Activated CD8-positive, alpha-beta memory T cell treated with anti-CD3 and anti-CD28 coated beads, Interleukin-2, amount 10 ng/mL, durations not matched to agents 7 days and 5 days (primary cell): ENCODE measurements at regions of chr19 and their contacts with region 1.

Region 1: GRCh38 chr19:3429581-3430080 is 50.7 kb downstream of the SMIM24 start:
- DNase-seq: peak; percentile 80
- ATAC-seq: peak; percentile 69
- H3K4me3 Mint-ChIP-seq: no peak overlapping the region
- H3K27ac Mint-ChIP-seq: no peak overlapping the region
- H3K4me1 Mint-ChIP-seq: peaks cover 6% of the 10 kb centered on the region
- H3K27me3 Mint-ChIP-seq: no peaks in the 10 kb centered on the region

Region 2: GRCh38 chr19:3304871-3305423 is 124.7 kb before region 1 on chr19:
- CTCF ChIA-PET with region 1: interaction called, 23 read pairs
- DNase-seq: peak; percentile 80
- ATAC-seq: peak; percentile 66
- H3K4me3 Mint-ChIP-seq: no peak overlapping the region
- H3K27ac Mint-ChIP-seq: no peak overlapping the region
- H3K4me1 Mint-ChIP-seq: no peaks in the 10 kb centered on the region
- H3K27me3 Mint-ChIP-seq: peaks cover 8% of the 10 kb centered on the region

Region 3: DNA sequence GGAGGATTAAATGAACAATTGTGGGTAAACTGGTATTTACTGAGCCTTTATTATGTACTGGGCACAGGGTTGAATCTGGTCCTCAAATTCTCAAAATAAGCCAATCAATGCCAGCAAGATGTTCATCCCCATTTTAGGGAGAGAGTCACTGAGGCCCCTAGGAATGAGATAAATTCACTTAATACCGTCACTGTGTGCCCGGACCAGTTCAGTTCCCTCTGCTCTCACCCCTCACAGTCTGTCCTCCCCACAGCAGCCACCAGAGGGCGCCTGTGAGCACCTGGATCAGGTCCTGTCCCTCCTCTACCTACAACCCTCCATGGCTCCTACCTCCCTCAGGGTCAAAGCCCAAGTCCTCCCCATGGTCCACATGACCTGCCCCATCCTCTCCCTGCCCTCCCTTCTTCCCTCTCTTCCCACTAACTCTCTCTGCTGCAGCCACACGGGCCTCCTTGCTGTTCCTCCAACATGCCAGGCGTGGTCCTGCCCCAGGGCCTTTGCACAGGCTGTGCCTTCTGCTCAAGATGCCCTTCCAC is 105.2 kb before region 1 on chr19:
- CTCF ChIA-PET with region 1: interaction called, 54 read pairs
- DNase-seq: peak; percentile 84
- ATAC-seq: peak; percentile 79
- H3K4me3 Mint-ChIP-seq: no peak overlapping the region
- H3K27ac Mint-ChIP-seq: no peak overlapping the region
- H3K4me1 Mint-ChIP-seq: no peaks in the 10 kb centered on the region
- H3K27me3 Mint-ChIP-seq: no peaks in the 10 kb centered on the region

Region 4: DNA sequence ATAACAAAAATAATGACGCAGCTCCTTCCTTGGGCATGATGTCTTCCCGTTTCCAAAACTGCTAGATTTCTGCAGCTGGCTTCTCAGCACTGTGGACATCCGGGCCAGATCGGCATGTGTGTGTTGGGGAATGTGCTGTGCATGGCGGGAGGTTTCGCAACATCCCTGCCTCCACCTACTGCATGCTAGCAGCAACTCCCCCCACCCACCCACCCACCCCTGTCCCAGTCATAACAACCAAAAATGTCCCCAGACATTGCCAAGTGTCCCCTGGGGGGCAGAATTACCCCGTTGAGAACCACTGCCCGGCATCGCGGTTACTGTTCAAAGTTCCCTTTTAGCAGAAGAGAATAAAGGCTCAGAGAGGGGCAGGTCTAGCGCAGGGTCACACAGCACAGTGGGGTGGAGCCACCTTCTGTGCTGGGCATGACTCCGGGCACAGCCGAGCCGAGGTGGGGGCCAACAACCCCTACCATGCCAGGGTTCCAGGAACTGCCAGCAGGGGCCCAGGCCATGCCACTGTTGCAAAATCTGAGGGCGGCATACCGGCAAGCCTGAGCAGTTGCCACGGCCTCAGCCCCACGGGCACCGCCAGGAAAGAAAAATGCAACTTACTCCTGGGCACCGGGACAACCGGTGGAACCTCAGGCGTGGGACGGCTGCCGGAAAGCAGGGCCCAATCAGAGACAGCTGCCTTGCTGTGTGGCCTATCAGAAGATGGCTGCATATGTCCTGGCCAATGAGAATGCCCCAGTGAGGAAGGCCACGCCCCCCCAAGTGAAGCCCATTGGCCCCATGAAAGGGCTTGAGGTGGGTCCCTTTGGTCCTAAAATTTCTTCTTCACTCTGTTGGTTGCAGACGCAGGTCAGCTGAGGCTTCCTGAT is 85.8 kb before region 1 on chr19:
- CTCF ChIA-PET with region 1: interaction called, 14 read pairs
- DNase-seq: peak; percentile 47
- ATAC-seq: peak; percentile 83
- H3K4me3 Mint-ChIP-seq: no peak overlapping the region
- H3K27ac Mint-ChIP-seq: no peak overlapping the region
- H3K4me1 Mint-ChIP-seq: peaks cover under 1% of the 10 kb centered on the region
- H3K27me3 Mint-ChIP-seq: no peaks in the 10 kb centered on the region

Region 5: DNA sequence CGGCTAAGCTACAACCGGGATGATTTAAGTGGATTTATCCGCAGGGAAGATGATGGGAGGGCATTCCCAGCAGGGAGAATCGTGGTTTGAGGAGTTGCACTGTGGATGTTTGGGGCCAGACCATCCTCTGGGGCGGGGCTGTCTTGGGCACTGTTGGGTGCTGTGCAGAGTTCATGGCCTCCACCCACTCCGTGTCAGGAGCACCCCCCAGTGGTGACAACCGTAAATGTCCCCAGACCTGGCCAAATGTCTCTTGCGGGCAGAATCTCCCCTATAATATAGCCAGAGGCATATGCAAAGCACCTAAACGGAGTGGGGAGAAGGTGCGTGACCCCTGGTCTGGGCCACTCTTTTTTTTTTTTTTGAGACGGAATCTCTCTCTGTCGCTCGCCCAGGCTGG is 10.5 kb after region 1 on chr19:
- CTCF ChIA-PET with region 1: interaction called, 21 read pairs
- DNase-seq: peak; percentile 71
- ATAC-seq: peak; percentile 18
- H3K4me3 Mint-ChIP-seq: no peak overlapping the region
- H3K27ac Mint-ChIP-seq: no peak overlapping the region
- H3K4me1 Mint-ChIP-seq: peaks cover 4% of the 10 kb centered on the region
- H3K27me3 Mint-ChIP-seq: no peaks in the 10 kb centered on the region

Region 6: GRCh38 chr19:3471954-3472655 is 42.5 kb after region 1 on chr19:
- CTCF ChIA-PET with region 1: interaction called, 11 read pairs
- DNase-seq: no peak
- ATAC-seq: no peak
- H3K4me3 Mint-ChIP-seq: no peak overlapping the region
- H3K27ac Mint-ChIP-seq: no peak overlapping the region
- H3K4me1 Mint-ChIP-seq: no peaks in the 10 kb centered on the region
- H3K27me3 Mint-ChIP-seq: no peaks in the 10 kb centered on the region